ENCODE measurements at regions of chr4 and their contacts with region 1.

Region 1: GRCh38 chr4:119490335-119490734 is 138.3 kb downstream of the PDE5A start:
- DNase-seq: no peak
- H3K4me3 ChIP-seq: no peak overlapping the region
- H3K27ac ChIP-seq: no peak overlapping the region
- H3K4me1 ChIP-seq: no peaks in the 10 kb centered on the region
- H3K27me3 ChIP-seq: no peaks in the 10 kb centered on the region
- CTCF ChIP-seq: peak in 2 of 3 experiments; percentile 37 to 55; a peak in 2 of 4 replicates
- EP300 ChIP-seq: no peak
- POLR2A ChIP-seq: no peak
- RAD21 ChIP-seq: peak; percentile 69 to 72

Region 2: GRCh38 chr4:119212234-119212963 is 277.9 kb before region 1 on chr4 and contains the start of gene USP53:
- CTCF ChIA-PET with region 1: no interaction called
- POLR2A ChIA-PET with region 1: no interaction called
- DNase-seq: peak; percentile 97 to 99
- H3K4me3 ChIP-seq: peak within 1 kb of the TSS; percentile 72 to 86 (median 82)
- H3K27ac ChIP-seq: peak within 1 kb of the TSS; percentile 94
- H3K4me1 ChIP-seq: peaks cover 0 to 2% (median 0%) of the 10 kb centered on the region in 4 experiments; a peak in 2 of 7 replicates
- H3K27me3 ChIP-seq: no peaks in the 10 kb centered on the region
- CTCF ChIP-seq: no peak
- EP300 ChIP-seq: no peak
- POLR2A ChIP-seq: peak; percentile 90 to 92
- RAD21 ChIP-seq: no peak
- total RNA-seq, gene USP53: 13.9 and 14.9 TPM in 2 replicates

Region 3: DNA sequence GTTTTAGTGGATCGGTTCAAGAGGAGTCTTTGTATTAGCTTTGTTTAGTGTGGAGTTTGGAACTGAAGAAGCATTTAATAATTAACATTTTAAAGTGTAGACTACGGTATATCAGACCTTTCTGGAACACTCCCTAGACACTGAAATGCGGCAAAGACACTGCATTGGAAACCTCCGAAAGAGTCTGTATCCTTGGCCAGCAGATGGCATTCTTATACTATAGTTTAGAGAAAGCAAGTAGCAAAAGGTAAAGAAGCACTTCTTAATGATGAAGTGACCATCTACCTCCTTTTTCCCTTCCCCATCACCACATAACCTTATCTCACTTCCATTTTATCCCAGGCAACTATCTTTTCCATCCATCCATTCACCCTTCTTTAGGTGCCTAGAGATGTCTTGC is 176.0 kb before region 1 on chr4:
- CTCF ChIA-PET with region 1: interaction called, 22 read pairs
- POLR2A ChIA-PET with region 1: no interaction called
- DNase-seq: no peak
- H3K4me3 ChIP-seq: no peak overlapping the region
- H3K27ac ChIP-seq: no peak overlapping the region
- H3K4me1 ChIP-seq: no peaks in the 10 kb centered on the region
- H3K27me3 ChIP-seq: no peaks in the 10 kb centered on the region
- CTCF ChIP-seq: peak in 2 of 3 experiments; percentile 58 to 65; a peak in 2 of 4 replicates
- EP300 ChIP-seq: no peak
- POLR2A ChIP-seq: no peak
- RAD21 ChIP-seq: peak; percentile 85 to 88

Measured in H1 (cell line).